ENCODE measurements at regions of chr6 and their contacts with region 1.

Region 1: DNA sequence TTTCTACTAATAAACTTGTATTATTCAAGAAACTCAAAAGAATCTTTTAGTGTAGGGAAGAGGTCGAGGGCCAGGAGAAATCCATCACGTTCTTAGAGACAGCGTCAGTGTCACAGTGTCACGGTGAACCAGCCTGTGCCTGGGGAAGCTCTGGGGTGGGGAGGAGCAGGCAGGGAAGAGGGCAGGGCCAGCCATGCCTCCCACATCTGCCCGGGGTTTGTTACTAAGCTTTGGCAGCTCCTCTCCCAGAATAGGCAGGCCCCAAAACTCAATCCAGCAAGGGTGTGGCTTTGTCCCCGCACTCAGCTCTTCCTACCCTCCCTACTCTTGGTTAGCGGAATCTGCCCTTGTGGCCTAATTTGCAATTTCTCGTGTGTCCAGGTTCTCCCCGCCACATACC is 72.9 kb downstream of the TCP11 start:
- DNase-seq: no peak
- H3K4me3 ChIP-seq: no peak overlapping the region
- H3K27ac ChIP-seq: no peak overlapping the region
- H3K27me3 ChIP-seq: no peaks in the 10 kb centered on the region
- CTCF ChIP-seq: no peak

Region 2: GRCh38 chr6:34912715-34913464 is 155.3 kb before region 1 on chr6:
- CTCF ChIA-PET with region 1: no interaction called
- POLR2A ChIA-PET with region 1: no interaction called
- DNase-seq: peak; percentile 53
- H3K4me3 ChIP-seq: no peak overlapping the region
- H3K27ac ChIP-seq: no peak overlapping the region
- H3K27me3 ChIP-seq: peaks cover 7% of the 10 kb centered on the region
- CTCF ChIP-seq: no peak

Region 3: GRCh38 chr6:35056952-35057351 is 11.3 kb before region 1 on chr6:
- CTCF ChIA-PET with region 1: no interaction called
- POLR2A ChIA-PET with region 1: interaction called, 12 read pairs
- DNase-seq: no peak
- H3K4me3 ChIP-seq: no peak overlapping the region
- H3K27ac ChIP-seq: no peak overlapping the region
- H3K27me3 ChIP-seq: no peaks in the 10 kb centered on the region
- CTCF ChIP-seq: no peak

Region 4: DNA sequence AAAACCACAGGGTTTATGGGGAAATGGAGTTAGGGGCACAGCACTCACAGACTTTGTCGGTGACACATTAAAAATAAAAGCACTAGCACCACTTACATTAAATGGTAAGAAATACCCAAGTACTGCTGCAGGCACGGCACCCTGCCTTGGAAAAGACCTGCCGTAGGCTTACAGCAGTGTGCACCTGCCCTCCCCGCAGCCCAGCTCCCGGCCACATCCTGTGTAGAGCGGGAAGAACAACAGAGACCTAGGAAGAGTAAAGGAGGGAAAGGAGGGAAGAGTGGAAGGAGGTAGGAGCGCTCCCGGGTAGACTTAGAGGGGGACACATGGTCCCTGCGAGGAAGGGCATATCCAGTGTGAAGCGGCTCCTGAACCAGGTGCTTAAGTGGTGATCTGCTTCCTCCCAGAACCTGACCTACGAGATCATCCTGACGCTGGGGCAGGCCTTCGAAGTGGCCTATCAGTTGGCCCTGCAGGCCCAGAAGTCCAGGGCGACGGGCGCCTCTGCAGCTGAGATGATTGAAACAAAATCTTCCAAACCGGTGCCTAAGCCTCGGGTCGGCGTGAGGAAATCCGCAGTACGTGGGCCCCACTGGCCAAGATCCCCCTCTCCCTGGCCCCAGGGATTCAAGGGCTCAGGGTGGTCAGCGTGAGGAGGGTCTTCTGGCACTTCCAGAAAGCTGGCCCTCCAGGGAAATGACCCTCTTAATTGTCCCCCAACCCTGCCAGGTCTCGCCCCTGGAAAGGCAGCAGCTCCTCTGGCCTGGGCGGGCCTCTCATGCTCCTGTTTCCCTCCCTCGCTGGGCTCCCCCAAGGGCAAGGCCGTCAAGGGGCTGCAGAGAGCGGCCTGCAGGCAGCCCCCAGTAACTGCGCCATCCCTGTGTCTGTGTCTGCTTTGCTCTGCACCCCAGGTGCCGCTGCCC is 17.4 kb after region 1 on chr6:
- CTCF ChIA-PET with region 1: no interaction called
- POLR2A ChIA-PET with region 1: no interaction called
- DNase-seq: no peak
- H3K4me3 ChIP-seq: no peak overlapping the region
- H3K27ac ChIP-seq: no peak overlapping the region
- H3K27me3 ChIP-seq: no peaks in the 10 kb centered on the region
- CTCF ChIP-seq: no peak

Region 5: DNA sequence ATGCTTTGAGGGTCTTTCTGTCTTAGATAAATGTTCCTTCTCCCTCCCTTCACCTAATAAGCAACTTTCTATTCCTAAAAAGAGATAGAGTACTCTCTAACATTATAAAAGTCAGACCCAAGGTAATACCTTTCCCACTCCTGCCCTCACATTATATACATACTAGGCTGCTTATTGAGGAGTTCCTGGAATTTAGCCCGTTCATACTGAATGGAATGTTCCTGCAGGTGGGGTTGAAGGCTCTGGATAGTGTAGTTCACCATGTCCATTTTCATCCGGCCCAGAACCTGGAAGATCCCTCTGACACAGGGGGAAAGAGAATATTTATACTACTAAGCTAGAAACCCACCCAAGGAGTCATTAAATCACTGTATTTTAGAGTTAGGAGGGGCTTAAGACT is 52.5 kb after region 1 on chr6:
- CTCF ChIA-PET with region 1: no interaction called
- POLR2A ChIA-PET with region 1: no interaction called
- DNase-seq: no peak
- H3K4me3 ChIP-seq: no peak overlapping the region
- H3K27ac ChIP-seq: no peak overlapping the region
- H3K27me3 ChIP-seq: peaks cover 6% of the 10 kb centered on the region
- CTCF ChIP-seq: no peak

Region 6: DNA sequence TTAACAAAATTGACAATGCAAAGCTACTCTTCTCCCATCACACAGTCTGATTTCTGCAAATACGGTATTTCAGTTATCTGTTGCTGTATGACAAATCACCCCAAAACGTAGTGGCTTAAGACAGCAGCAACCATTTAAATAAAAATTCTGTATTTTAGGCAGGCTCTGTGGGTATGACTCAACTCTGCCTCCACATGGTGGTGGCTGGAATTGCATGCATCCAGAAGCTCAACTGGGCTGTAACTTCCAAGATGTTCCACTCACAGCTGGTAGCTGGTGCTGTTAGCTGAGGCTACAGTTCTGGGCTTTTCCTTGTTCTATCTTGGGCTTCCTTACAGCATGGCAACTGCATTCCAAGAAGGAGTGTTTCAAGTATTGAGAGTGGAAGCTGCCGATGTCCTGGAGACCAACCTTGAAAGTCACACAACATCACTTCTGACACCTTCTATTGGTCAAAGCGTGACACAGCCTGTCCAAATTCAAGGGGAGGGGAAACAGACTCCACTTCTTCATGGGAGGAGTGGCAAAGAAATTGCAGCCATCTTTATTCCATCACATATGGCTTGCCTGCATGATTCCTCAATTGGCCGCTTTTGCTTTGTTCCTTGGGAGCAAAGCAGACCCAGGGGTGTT is 484.2 kb after region 1 on chr6:
- CTCF ChIA-PET with region 1: no interaction called
- POLR2A ChIA-PET with region 1: no interaction called
- DNase-seq: no peak
- H3K4me3 ChIP-seq: no peak overlapping the region
- H3K27ac ChIP-seq: no peak overlapping the region
- H3K27me3 ChIP-seq: peaks cover 8% of the 10 kb centered on the region
- CTCF ChIP-seq: peak; percentile 80